Activated T-helper 1 cell treated with anti-CD3 and anti-CD28 coated beads, Interleukin-12 subunit alpha, Interleukin-12 subunit beta, Interleukin-2, Interleukin-4 antibody, amounts not matched to agents 30 ng/mL and 10 ng/mL and 1 ng/mL, durations not matched to agents 14 hours and 24 hours and 36 hours (primary cell): ENCODE measurements at regions of chr17 and their contacts with region 1.

Region 1: DNA sequence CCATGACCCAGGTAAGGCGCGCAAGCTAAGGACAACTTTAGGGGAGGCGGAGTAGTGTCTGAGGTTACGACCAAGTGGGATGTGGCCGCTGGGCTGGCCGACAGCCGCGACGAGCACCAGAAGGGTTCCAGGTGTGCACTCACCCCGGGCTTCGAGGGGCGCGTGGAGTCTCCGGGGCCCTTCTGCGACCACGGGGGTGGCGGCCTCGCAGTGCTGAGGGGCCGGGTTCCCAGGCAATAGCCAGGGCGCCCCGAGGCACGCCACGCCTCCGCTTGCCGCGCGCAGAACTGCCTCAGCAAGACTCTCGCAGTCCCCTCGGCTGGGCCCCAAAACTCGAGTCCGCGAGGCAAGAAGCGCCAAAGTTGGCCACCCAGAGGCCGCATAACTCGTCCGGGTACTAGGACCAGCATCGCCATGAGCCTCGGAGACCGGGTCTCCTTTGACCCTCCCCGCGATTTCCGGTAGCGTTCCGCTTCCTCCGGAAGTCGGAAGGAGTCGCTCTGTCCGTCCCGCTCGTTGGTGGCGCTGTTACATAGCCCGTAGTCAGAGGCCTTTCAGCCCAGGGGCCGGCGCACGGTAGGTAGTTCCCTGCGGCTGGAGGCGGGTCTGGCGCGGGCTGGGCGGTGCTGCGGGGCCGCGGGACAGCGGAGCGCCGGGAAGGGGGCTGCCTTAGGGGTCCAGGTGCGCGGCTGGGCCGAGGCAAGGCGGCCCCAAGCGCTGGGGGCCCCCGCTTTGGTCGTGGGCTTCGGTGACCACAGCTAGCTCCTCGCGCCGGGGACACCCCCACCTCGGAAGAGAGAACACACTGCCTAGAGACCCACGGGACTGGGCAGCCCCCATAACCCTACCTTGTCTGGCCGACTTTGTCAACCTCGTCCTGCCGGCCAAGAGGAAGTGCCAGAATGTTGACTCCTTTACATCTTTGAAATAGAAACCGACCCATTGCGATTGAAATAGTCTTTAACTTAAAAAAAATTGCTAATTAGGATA is at the starts of genes ADPRM and SCO1:
- DNase-seq: peak; percentile 92
- H3K4me3 Mint-ChIP-seq: peak within 1 kb of the TSS; percentile 96
- H3K27ac Mint-ChIP-seq: peak within 1 kb of the TSS; percentile 96
- H3K4me1 Mint-ChIP-seq: peaks cover 68% of the 10 kb centered on the region
- H3K27me3 Mint-ChIP-seq: no peaks in the 10 kb centered on the region
- total RNA-seq, gene ADPRM: 10.3 and 12.6 TPM in 2 replicates
- total RNA-seq, gene SCO1: 42.0 and 43.7 TPM in 2 replicates

Region 2: GRCh38 chr17:10646392-10646990 is 50.9 kb before region 1 on chr17:
- intact Hi-C with region 1: loop called (anchors 2 kb)
- DNase-seq: peak; percentile 60
- H3K4me3 Mint-ChIP-seq: no peak overlapping the region
- H3K27ac Mint-ChIP-seq: no peak overlapping the region
- H3K4me1 Mint-ChIP-seq: no peaks in the 10 kb centered on the region
- H3K27me3 Mint-ChIP-seq: no peaks in the 10 kb centered on the region

Region 3: GRCh38 chr17:10729334-10730193 is 32.2 kb after region 1 on chr17 and contains the start of gene TMEM220:
- intact Hi-C with region 1: loop called (anchors 1 kb)
- DNase-seq: peak; percentile 10
- H3K4me3 Mint-ChIP-seq: peak within 1 kb of the TSS; percentile 93
- H3K27ac Mint-ChIP-seq: peak within 1 kb of the TSS; percentile 61
- H3K4me1 Mint-ChIP-seq: peaks cover 13% of the 10 kb centered on the region
- H3K27me3 Mint-ChIP-seq: peaks cover 15% of the 10 kb centered on the region
- total RNA-seq, gene TMEM220: 0.98 and 1.3 TPM in 2 replicates

Region 4: GRCh38 chr17:10743316-10744009 is 46.1 kb after region 1 on chr17:
- intact Hi-C with region 1: no loop called
- DNase-seq: no peak
- H3K4me3 Mint-ChIP-seq: no peak overlapping the region
- H3K27ac Mint-ChIP-seq: no peak overlapping the region
- H3K4me1 Mint-ChIP-seq: peaks cover 4% of the 10 kb centered on the region
- H3K27me3 Mint-ChIP-seq: peaks cover 14% of the 10 kb centered on the region

Region 5: GRCh38 chr17:10844621-10845387 is 147.4 kb after region 1 on chr17:
- intact Hi-C with region 1: loop called (anchors 5 kb)
- DNase-seq: peak; percentile 49
- H3K4me3 Mint-ChIP-seq: peak overlapping the region; percentile 69
- H3K27ac Mint-ChIP-seq: no peak overlapping the region
- H3K4me1 Mint-ChIP-seq: peaks cover 6% of the 10 kb centered on the region
- H3K27me3 Mint-ChIP-seq: peaks cover 12% of the 10 kb centered on the region

Region 6: DNA sequence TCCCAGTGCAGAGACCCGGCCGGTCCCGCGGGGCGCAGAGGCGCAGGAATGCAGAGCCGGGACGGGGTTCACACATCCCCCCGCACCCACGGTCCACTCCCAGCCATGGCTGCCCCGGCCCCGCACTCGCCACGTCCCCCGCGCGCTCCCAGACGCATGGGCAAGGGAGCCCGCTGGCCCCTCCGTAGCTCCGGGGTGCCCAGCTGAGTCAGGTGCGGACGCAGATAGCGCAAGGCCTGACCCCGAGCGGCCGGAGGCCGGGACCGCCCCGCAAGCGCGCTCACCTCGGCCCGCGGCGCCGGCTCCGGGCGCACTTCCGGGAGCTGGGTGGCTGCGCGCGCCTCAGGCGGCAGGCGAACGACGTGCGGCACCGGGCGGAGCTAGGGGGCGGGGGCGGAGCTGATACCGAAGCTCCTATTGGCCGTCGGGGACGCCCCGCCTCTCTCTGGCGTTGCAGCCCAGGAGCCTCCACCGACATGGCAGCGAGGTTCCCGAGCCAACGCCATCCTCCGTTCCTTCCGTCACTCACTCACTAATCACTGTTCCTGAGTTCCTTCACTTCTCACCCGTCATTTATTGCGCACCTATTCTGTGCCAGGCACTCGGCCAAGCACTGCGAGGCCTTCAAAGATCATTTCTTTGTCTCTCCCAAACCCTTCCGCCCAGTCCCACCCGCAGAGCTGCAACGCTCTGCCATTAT is 1299.9 kb after region 1 on chr17 and contains the start of gene ZNF18:
- intact Hi-C with region 1: loop called (anchors 5 kb)
- DNase-seq: peak; percentile 94
- H3K4me3 Mint-ChIP-seq: peak within 1 kb of the TSS; percentile 94
- H3K27ac Mint-ChIP-seq: peak within 1 kb of the TSS; percentile 92
- H3K4me1 Mint-ChIP-seq: peaks cover 14% of the 10 kb centered on the region
- H3K27me3 Mint-ChIP-seq: peaks cover under 1% of the 10 kb centered on the region
- total RNA-seq, gene ZNF18: 7.7 and 11.0 TPM in 2 replicates